AG04449 (cell line): ENCODE measurements at regions of chr11 and their contacts with region 1.

Region 1: GRCh38 chr11:250740-251299 is 14.0 kb downstream of the PSMD13 start:
- DNase-seq: no peak
- H3K4me3 ChIP-seq: no peak overlapping the region
- CTCF ChIP-seq: peak; percentile 69

Region 2: DNA sequence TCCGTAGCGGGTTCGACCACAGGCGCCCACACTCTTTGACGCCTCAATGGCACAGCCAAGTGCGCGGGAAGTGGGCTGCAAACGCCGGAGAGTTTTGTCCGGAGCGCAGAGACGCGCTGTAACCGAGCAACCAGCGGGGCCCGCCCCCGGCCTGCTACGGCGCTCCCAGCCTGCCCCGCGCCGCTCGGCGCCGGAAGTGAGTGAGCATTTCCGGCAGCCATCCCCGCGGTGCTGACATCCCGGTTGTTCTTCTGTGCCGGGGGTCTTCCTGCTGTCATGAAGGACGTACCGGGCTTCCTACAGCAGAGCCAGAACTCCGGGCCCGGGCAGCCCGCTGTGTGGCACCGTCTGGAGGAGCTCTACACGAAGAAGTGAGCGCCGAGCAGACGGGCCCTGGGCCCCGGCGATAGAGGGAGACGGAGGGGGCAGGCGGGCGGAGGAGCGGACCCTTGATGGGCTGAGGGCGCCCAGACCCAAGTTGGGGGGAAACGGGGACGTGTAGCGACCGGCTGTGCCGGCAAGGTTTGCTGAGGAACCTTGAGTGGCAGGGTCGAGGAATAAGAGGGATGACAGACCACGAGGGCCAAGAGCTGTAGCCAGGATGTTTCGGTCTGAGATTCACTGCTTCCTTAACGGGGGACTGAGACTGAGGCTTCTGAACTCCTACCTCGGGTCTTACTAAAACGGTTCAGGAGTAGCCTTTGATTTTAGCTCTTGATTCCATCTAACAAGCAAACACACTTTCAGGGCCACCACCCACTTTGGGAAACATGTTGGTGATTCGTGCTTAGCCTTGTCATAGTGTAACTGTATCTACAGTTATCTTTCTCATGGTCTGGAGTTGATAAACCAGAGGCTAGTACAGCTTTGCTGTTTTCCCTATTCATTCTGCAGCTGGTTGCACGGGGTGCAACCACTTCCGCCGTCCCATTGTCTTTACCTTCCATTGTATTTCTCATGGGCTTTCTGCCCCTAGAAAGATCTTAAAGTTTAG is 13.7 kb before region 1 on chr11 and contains the start of gene PSMD13:
- CTCF ChIA-PET with region 1: interaction called, 79 read pairs
- POLR2A ChIA-PET with region 1: no interaction called
- DNase-seq: no peak
- H3K4me3 ChIP-seq: peak within 1 kb of the TSS; percentile 91
- CTCF ChIP-seq: no peak

Region 3: DNA sequence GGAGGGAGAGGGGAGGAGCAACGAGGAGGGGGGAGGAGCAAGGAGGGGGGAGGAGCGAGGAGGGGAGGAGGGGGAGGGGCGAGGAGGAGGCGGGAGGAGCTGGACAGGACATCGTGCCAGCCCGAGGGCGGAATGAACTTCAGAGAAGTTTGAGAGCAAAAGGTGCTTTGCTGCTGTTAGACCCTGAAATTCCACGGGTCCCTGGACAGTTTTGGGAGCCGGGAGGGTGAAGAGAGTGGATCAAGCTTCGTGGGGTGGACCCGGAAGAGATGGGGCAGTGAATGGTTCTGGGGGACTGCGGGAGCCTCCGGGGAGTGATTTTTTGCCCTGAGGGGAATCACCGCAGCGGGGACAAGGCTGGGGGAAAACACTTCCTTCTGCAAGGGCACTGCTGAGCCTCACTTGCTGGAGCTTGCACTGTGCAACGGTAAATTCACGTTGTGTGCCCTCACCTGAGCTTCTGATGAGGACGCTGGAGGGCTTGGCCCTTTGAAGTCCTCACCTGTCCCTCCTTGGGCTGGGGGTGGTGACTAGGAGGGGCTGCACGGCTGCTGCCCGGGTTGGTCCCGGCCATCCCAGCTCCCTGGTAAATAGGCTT is 16.8 kb after region 1 on chr11:
- CTCF ChIA-PET with region 1: interaction called, 12 read pairs
- POLR2A ChIA-PET with region 1: no interaction called
- DNase-seq: no peak
- H3K4me3 ChIP-seq: no peak overlapping the region
- CTCF ChIP-seq: no peak

Region 4: GRCh38 chr11:304915-305843 is 54.4 kb after region 1 on chr11:
- CTCF ChIA-PET with region 1: interaction called, 17 read pairs
- POLR2A ChIA-PET with region 1: no interaction called
- DNase-seq: peak; percentile 44
- H3K4me3 ChIP-seq: no peak overlapping the region; the same call in 1 of the 2 replicates
- CTCF ChIP-seq: peak; percentile 48

Region 5: DNA sequence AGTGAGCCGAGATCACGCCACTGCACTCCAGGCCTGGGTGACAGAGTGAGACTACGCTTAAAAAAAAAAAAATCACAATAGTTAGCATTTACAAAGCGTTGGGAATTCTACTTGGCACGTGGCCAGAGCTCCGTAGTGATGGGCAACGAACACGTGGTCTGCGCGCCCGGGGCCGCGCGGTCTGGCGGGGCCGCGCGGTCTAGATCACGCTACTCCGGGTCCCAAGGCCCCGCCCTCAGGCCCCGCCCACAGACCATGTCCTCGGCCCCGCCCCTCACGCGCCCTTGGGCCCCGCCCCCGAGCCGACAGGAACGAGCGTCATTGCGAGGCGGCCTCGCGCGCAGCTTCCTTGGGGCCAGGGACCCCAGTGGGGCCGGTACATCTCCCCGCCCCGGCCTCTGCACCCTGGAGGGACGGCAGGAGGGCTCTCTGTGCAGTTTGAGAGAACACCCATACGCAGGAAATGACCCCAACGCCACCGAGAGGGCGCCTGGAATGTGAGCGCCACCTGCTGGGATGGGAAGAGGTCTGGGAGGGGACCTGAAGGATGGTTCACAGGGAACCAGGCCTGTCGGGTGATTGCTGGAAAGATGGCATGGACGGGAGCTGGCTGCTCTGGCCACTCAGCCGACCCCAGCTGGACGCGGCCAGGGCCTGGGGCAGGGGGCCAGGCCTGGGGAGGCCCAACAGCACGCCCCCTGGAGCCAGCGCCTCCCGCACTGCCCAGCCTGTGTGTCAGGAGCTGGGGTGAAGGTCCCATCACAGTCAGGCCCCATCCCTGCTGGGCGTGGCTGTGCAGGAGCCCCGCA is 197.3 kb after region 1 on chr11:
- CTCF ChIA-PET with region 1: interaction called, 10 read pairs
- POLR2A ChIA-PET with region 1: no interaction called
- DNase-seq: peak; percentile 9
- H3K4me3 ChIP-seq: peak overlapping the region; percentile 76
- CTCF ChIP-seq: peak; percentile 82